CD8-positive, alpha-beta T cell (primary cell): ENCODE measurements at regions of chr18 and their contacts with region 1.

Region 1: GRCh38 chr18:76927223-76927725 is 104.9 kb downstream of the ZNF236 start:
- DNase-seq: no peak
- ATAC-seq: no peak
- H3K4me3 ChIP-seq: no peak overlapping the region
- H3K4me3 Mint-ChIP-seq: no peak overlapping the region
- H3K27ac ChIP-seq: no peak overlapping the region
- H3K27ac Mint-ChIP-seq: no peak overlapping the region
- H3K4me1 ChIP-seq: no peaks in the 10 kb centered on the region
- H3K4me1 Mint-ChIP-seq: peaks cover 1% of the 10 kb centered on the region
- H3K27me3 ChIP-seq: no peaks in the 10 kb centered on the region
- H3K27me3 Mint-ChIP-seq: no peaks in the 10 kb centered on the region
- CTCF ChIP-seq: no peak

Region 2: GRCh38 chr18:76973520-76974266 is 46.4 kb after region 1 on chr18:
- CTCF ChIA-PET with region 1: no interaction called
- POLR2A ChIA-PET with region 1: no interaction called
- intact Hi-C with region 1: loop called in 1 of 2 experiments (anchors 2 kb)
- DNase-seq: peak in 1 of 9 experiments; percentile 44
- ATAC-seq: no peak
- H3K4me3 ChIP-seq: no peak overlapping the region
- H3K4me3 Mint-ChIP-seq: no peak overlapping the region
- H3K27ac ChIP-seq: no peak overlapping the region
- H3K27ac Mint-ChIP-seq: no peak overlapping the region
- H3K4me1 ChIP-seq: no peaks in the 10 kb centered on the region
- H3K4me1 Mint-ChIP-seq: no peaks in the 10 kb centered on the region
- H3K27me3 ChIP-seq: no peaks in the 10 kb centered on the region
- H3K27me3 Mint-ChIP-seq: no peaks in the 10 kb centered on the region
- CTCF ChIP-seq: no peak